ENCODE measurements at regions of chr5 and their contacts with region 1.

Region 1: DNA sequence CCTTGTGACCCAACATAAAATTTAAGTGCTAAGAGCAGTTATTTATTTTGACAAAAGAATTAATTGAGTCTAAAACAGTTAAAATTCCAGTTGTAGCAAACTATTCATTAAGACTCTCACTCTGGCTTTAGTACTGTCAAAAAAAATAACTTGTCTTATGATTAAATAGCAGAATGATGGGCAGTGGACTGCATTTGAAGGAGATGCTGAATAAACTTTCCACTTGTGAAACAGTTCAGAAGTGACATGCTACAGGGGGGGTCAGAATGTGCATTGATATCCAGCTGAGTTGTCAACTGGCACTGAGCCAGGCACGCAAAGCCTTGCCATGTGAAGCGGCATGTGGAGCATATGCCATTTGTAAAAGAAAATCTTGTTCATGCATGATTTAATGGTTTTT is 76.0 kb downstream of the FCHO2 start:
- DNase-seq: peak; percentile 34 to 65
- ATAC-seq: peak in 2 of 4 donors; percentile 59 to 76
- H3K4me3 ChIP-seq: no peak overlapping the region
- H3K27ac ChIP-seq: no peak overlapping the region
- H3K4me1 ChIP-seq: peaks cover 4% of the 10 kb centered on the region
- H3K27me3 ChIP-seq: no peaks in the 10 kb centered on the region
- CTCF ChIP-seq: no peak

Region 2: DNA sequence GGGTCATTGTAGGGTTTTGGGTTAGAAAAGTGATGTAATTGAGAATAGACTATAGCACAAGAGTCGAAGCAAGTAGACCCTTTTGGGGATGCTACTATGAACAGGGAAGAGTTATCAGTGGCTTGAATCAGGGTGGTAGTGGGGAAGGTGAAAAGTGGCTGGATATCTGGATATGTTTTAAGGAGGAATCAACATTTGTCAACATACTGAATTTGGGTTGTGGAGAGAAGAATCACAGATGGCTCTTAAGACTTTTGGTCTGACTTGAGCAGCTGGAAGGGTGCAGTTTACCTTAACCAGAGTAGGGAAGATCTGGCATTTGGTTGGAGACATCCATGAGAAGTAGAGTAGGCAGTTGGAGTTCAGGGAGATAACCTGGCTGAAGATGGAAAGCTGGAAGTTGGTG is 114.5 kb before region 1 on chr5:
- intact Hi-C with region 1: loop called in 1 of 2 experiments (anchors 10 kb)
- DNase-seq: no peak
- ATAC-seq: peak in 1 of 4 donors; percentile 8
- H3K4me3 ChIP-seq: no peak overlapping the region
- H3K27ac ChIP-seq: no peak overlapping the region
- H3K4me1 ChIP-seq: no peaks in the 10 kb centered on the region
- H3K27me3 ChIP-seq: no peaks in the 10 kb centered on the region
- CTCF ChIP-seq: no peak

Region 3: GRCh38 chr5:72955768-72956323 is 76.0 kb before region 1 on chr5 and contains the start of gene FCHO2:
- intact Hi-C with region 1: loop called in 1 of 2 experiments (anchors 1 kb)
- DNase-seq: peak; percentile 99 to 100
- ATAC-seq: peak; percentile 95 to 97 (median 96)
- H3K4me3 ChIP-seq: peak within 1 kb of the TSS; percentile 86
- H3K27ac ChIP-seq: peak within 1 kb of the TSS; percentile 96
- H3K4me1 ChIP-seq: peaks cover 29% of the 10 kb centered on the region
- H3K27me3 ChIP-seq: no peaks in the 10 kb centered on the region
- CTCF ChIP-seq: peak; percentile 76
- total RNA-seq, gene FCHO2: 16.6 to 19.9 (median 18.0) TPM

Region 4: GRCh38 chr5:72988769-72989168 is 43.1 kb before region 1 on chr5:
- intact Hi-C with region 1: no loop called
- DNase-seq: no peak
- ATAC-seq: no peak
- H3K4me3 ChIP-seq: no peak overlapping the region
- H3K27ac ChIP-seq: no peak overlapping the region
- H3K4me1 ChIP-seq: no peaks in the 10 kb centered on the region
- H3K27me3 ChIP-seq: no peaks in the 10 kb centered on the region
- CTCF ChIP-seq: no peak

Region 5: GRCh38 chr5:73008831-73009230 is 23.0 kb before region 1 on chr5:
- intact Hi-C with region 1: no loop called
- DNase-seq: no peak
- ATAC-seq: no peak
- H3K4me3 ChIP-seq: no peak overlapping the region
- H3K27ac ChIP-seq: no peak overlapping the region
- H3K4me1 ChIP-seq: no peaks in the 10 kb centered on the region
- H3K27me3 ChIP-seq: no peaks in the 10 kb centered on the region
- CTCF ChIP-seq: no peak